ENCODE measurements at regions of chr7 and their contacts with region 1.

Region 1: GRCh38 chr7:129644634-129645230 is 33.2 kb downstream of the NRF1 start:
- DNase-seq: no peak
- ATAC-seq: no peak
- H3K4me3 ChIP-seq: no peak overlapping the region
- H3K27ac ChIP-seq: no peak overlapping the region
- H3K4me1 ChIP-seq: no peaks in the 10 kb centered on the region
- H3K27me3 ChIP-seq: no peaks in the 10 kb centered on the region

Region 2: GRCh38 chr7:129489491-129489890 is 155.2 kb before region 1 on chr7:
- intact Hi-C with region 1: loop called in 1 of 2 experiments (anchors 10 kb)
- DNase-seq: no peak
- ATAC-seq: no peak
- H3K4me3 ChIP-seq: no peak overlapping the region
- H3K27ac ChIP-seq: no peak overlapping the region
- H3K4me1 ChIP-seq: no peaks in the 10 kb centered on the region
- H3K27me3 ChIP-seq: no peaks in the 10 kb centered on the region

Region 3: GRCh38 chr7:129958643-129959470 is 314.1 kb after region 1 on chr7:
- intact Hi-C with region 1: no loop called
- DNase-seq: peak; percentile 56 to 74
- ATAC-seq: no peak
- H3K4me3 ChIP-seq: no peak overlapping the region
- H3K27ac ChIP-seq: no peak overlapping the region
- H3K4me1 ChIP-seq: no peaks in the 10 kb centered on the region
- H3K27me3 ChIP-seq: no peaks in the 10 kb centered on the region

Measured in aorta (tissue), 5 donors.